ENCODE measurements at regions of chr5 and their contacts with region 1.

Region 1: GRCh38 chr5:33440482-33441240 is at the start of gene TARS1:
- DNase-seq: peak; percentile 99 to 100
- ATAC-seq: peak; percentile 96 to 98
- H3K4me3 ChIP-seq: peak within 1 kb of the TSS; percentile 70 to 97 (median 91)
- H3K27ac ChIP-seq: peak within 1 kb of the TSS; percentile 85 to 98 (median 96)
- H3K4me1 ChIP-seq: peaks cover 27 to 34% of the 10 kb centered on the region in 2 donors
- H3K27me3 ChIP-seq: no peaks in the 10 kb centered on the region
- CTCF ChIP-seq: peak in 1 of 5 experiments; percentile 21
- POLR2A ChIP-seq: peak; percentile 83 to 88
- total RNA-seq, gene TARS1: 62.8 to 77.6 (median 69.8) TPM

Region 2: DNA sequence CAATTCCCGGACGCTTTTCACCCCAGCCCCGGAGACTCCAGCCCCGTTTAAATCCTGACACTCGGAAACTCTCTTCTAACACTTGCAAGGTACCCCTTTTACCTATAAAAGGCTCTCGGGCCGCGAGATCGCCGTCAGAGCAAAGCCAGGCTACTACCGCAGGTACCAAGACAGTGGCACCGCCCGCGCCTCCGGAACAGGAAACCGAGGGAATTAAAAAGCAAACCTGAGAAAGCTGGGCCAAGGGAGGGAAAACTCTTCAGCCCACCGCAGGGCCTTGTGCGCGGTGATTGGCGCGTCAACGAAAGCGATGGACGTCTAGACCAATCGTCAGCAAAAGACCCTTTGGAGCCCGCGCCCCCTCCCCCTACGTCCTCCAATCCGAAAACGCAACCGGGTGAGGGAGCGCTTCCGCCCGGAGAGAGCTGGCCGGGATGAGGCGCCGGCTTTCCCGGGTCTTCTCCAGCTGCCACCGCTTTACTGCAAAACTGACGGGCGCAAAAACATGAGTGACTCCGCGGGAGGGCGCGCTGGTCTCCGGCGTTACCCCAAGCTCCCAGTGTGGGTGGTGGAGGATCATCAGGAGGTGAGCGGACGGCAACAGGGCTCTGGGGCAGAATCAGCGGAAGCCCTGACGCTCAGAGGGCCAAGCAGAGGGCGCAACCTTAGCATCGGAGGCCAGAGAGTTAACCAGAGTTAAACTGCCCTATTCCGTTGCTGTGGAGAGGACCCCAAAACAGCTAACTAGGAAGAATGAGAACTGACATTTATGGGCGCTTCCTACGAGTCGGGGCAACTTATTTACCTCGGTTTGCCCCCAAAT is 1908.6 kb before region 1 on chr5 and contains the starts of genes C5orf22 and DROSHA:
- in situ Hi-C with region 1: loop called in 1 of 4 experiments (anchors 25 kb)
- intact Hi-C with region 1: no loop called
- DNase-seq: peak; percentile 95
- ATAC-seq: peak; percentile 99 to 100
- H3K4me3 ChIP-seq: peak within 1 kb of the TSS; percentile 76 to 97 (median 86)
- H3K27ac ChIP-seq: peak within 1 kb of the TSS; percentile 66 to 92 (median 90)
- H3K4me1 ChIP-seq: peaks cover 21 to 34% of the 10 kb centered on the region in 2 donors
- H3K27me3 ChIP-seq: no peaks in the 10 kb centered on the region
- CTCF ChIP-seq: peak in 2 of 5 experiments; percentile 12
- POLR2A ChIP-seq: peak; percentile 64 to 76
- total RNA-seq, gene C5orf22: 24.1 to 27.0 (median 25.2) TPM
- total RNA-seq, gene DROSHA: 9.2 to 28.8 (median 28.4) TPM

Region 3: GRCh38 chr5:32312647-32313523 is 1127.8 kb before region 1 on chr5 and contains the start of gene MTMR12:
- in situ Hi-C with region 1: no loop called
- intact Hi-C with region 1: loop called (anchors 5 kb)
- DNase-seq: peak; percentile 99
- ATAC-seq: peak; percentile 97 to 98
- H3K4me3 ChIP-seq: peak within 1 kb of the TSS; percentile 69 to 88 (median 82)
- H3K27ac ChIP-seq: peak within 1 kb of the TSS; percentile 85 to 98 (median 92)
- H3K4me1 ChIP-seq: peaks cover 10 to 33% of the 10 kb centered on the region in 2 donors
- H3K27me3 ChIP-seq: no peaks in the 10 kb centered on the region
- CTCF ChIP-seq: no peak
- POLR2A ChIP-seq: peak; percentile 88 to 91
- total RNA-seq, gene MTMR12: 6.4 to 11.5 (median 10.6) TPM

Region 4: GRCh38 chr5:33936004-33936380 is 495.3 kb after region 1 on chr5:
- in situ Hi-C with region 1: loop called in 2 of 4 experiments (anchors 25 kb)
- intact Hi-C with region 1: loop called (anchors 2 kb)
- DNase-seq: no peak
- ATAC-seq: no peak
- H3K4me3 ChIP-seq: peak overlapping the region; percentile 19 to 46 (median 31)
- H3K27ac ChIP-seq: no peak overlapping the region
- H3K4me1 ChIP-seq: peaks cover 0 to 7% of the 10 kb centered on the region in 2 donors
- H3K27me3 ChIP-seq: peaks cover 43 to 53% (median 48%) of the 10 kb centered on the region in 3 donors
- CTCF ChIP-seq: peak in 2 of 5 experiments; percentile 23 to 38
- POLR2A ChIP-seq: no peak

Region 5: DNA sequence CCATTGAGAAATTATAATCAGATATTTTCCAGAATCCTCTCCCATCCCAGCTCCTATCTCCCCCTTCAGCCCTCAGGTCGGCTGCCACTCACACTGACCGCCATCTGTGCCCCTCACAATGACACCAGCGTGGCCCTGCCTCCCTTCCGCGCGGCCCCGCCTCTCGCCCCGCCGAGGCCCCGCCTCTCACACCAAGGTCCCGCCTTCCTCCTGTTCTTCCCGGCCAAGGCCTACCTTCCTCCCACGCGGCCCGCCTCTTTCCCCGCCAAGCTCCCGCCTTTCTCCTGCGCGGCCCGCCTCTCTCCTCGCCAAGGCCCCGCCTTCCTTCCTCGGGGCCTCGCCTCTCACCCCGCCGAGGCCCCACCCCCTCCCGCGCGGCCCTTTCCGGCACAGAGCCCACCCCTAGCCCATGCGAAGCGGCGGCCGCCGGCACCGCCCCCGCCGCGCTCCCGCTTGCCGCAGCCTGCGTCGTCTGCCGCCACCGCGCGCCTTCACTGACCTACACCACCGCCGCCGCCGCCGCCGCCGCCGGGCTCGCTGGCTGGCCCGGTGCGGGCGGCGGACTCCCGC is 1488.6 kb after region 1 on chr5 and contains the start of gene DNAJC21:
- in situ Hi-C with region 1: loop called in 2 of 4 experiments (anchors 10 to 25 kb)
- intact Hi-C with region 1: loop called (anchors 5 kb)
- DNase-seq: peak; percentile 96 to 98
- ATAC-seq: peak; percentile 89 to 90
- H3K4me3 ChIP-seq: peak within 1 kb of the TSS; percentile 83 to 98 (median 84)
- H3K27ac ChIP-seq: peak within 1 kb of the TSS; percentile 94 to 100 (median 96)
- H3K4me1 ChIP-seq: peaks cover 11 to 19% of the 10 kb centered on the region in 2 donors
- H3K27me3 ChIP-seq: no peaks in the 10 kb centered on the region
- CTCF ChIP-seq: no peak
- POLR2A ChIP-seq: no peak
- total RNA-seq, gene DNAJC21: 40.9 to 81.7 (median 74.7) TPM

Measured in gastrocnemius medialis (tissue), 4 donors.